Heart right ventricle (tissue), 16 donors: ENCODE measurements at regions of chr12 and their contacts with region 1.

Region 1: GRCh38 chr12:19757317-19757877 is 318.1 kb downstream of the AEBP2 start:
- DNase-seq: no peak
- ATAC-seq: peak in 5 of 8 donors; percentile 48 to 71 (median 55)
- H3K4me3 ChIP-seq: no peak overlapping the region
- H3K27ac ChIP-seq: peak overlapping the region in 4 of 10 donors; percentile 6 to 42 (median 30)
- H3K4me1 ChIP-seq: peaks cover 0 to 12% (median 0%) of the 10 kb centered on the region in 9 donors
- H3K27me3 ChIP-seq: no peaks in the 10 kb centered on the region
- CTCF ChIP-seq: peak; percentile 44 to 77 (median 69)

Region 2: GRCh38 chr12:19847294-19848059 is 90.1 kb after region 1 on chr12:
- intact Hi-C with region 1: loop called in 1 of 10 experiments (anchors 10 kb)
- DNase-seq: peak; percentile 25 to 55
- ATAC-seq: peak; percentile 77 to 91 (median 88)
- H3K4me3 ChIP-seq: peak overlapping the region in 4 of 10 donors; percentile 8 to 29 (median 17)
- H3K27ac ChIP-seq: peak overlapping the region; percentile 73 to 92 (median 86)
- H3K4me1 ChIP-seq: peaks cover 0 to 27% (median 19%) of the 10 kb centered on the region in 9 donors
- H3K27me3 ChIP-seq: no peaks in the 10 kb centered on the region
- CTCF ChIP-seq: no peak

Region 3: GRCh38 chr12:19885092-19885812 is 127.9 kb after region 1 on chr12:
- intact Hi-C with region 1: loop called in 4 of 10 experiments (anchors 5 to 10 kb)
- DNase-seq: peak in 1 of 2 donors; percentile 16
- ATAC-seq: peak in 5 of 8 donors; percentile 59 to 66 (median 62)
- H3K4me3 ChIP-seq: no peak overlapping the region
- H3K27ac ChIP-seq: peak overlapping the region in 9 of 10 donors; percentile 2 to 61 (median 42)
- H3K4me1 ChIP-seq: peaks cover 0 to 50% (median 32%) of the 10 kb centered on the region in 9 donors
- H3K27me3 ChIP-seq: no peaks in the 10 kb centered on the region
- CTCF ChIP-seq: no peak

Region 4: DNA sequence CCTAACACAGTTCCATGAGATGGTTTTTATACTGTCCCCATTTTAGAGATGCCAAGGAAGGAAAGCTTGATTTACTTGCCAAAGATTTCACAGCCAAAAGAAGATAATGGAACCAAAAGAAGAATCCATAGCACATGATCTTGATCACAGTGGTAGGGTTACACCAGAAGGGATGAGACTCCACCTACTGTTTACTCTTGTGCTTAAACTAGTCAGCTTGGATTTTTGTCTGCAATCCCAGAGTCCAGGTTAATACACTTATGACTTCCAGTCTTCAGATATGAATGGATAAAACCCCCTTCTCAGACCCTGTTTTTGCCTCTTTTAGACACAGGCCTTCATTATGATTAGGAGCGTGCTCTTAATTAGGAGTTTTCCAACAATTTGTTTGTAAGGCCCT is 136.1 kb after region 1 on chr12:
- intact Hi-C with region 1: loop called in 5 of 10 experiments (anchors 5 to 10 kb)
- DNase-seq: no peak
- ATAC-seq: peak in 5 of 8 donors; percentile 61 to 83 (median 63)
- H3K4me3 ChIP-seq: no peak overlapping the region
- H3K27ac ChIP-seq: no peak overlapping the region
- H3K4me1 ChIP-seq: peaks cover 0 to 27% (median 13%) of the 10 kb centered on the region in 9 donors
- H3K27me3 ChIP-seq: no peaks in the 10 kb centered on the region
- CTCF ChIP-seq: peak in 7 of 9 donors; percentile 9 to 54 (median 32)

Region 5: GRCh38 chr12:20624718-20625117 is 867.3 kb after region 1 on chr12:
- intact Hi-C with region 1: loop called in 1 of 10 experiments (anchors 10 kb)
- DNase-seq: no peak
- ATAC-seq: no peak
- H3K4me3 ChIP-seq: no peak overlapping the region
- H3K27ac ChIP-seq: no peak overlapping the region
- H3K4me1 ChIP-seq: peaks cover 3 to 30% (median 18%) of the 10 kb centered on the region in 9 donors
- H3K27me3 ChIP-seq: no peaks in the 10 kb centered on the region
- CTCF ChIP-seq: peak in 8 of 9 donors; percentile 11 to 53 (median 35)